ENCODE measurements at regions of chr5 and their contacts with region 1.

Region 1: GRCh38 chr5:76831110-76831452 is 12.3 kb downstream of the F2RL1 start:
- DNase-seq: peak; percentile 76
- ATAC-seq: no peak; the same call in none of the 2 replicates
- H3K4me3 ChIP-seq: no peak overlapping the region
- H3K27ac ChIP-seq: no peak overlapping the region
- H3K4me1 ChIP-seq: peaks cover 4% of the 10 kb centered on the region
- H3K27me3 ChIP-seq: no peaks in the 10 kb centered on the region
- CTCF ChIP-seq: no peak
- POLR2A ChIP-seq: no peak
- RAD21 ChIP-seq: no peak

Region 2: DNA sequence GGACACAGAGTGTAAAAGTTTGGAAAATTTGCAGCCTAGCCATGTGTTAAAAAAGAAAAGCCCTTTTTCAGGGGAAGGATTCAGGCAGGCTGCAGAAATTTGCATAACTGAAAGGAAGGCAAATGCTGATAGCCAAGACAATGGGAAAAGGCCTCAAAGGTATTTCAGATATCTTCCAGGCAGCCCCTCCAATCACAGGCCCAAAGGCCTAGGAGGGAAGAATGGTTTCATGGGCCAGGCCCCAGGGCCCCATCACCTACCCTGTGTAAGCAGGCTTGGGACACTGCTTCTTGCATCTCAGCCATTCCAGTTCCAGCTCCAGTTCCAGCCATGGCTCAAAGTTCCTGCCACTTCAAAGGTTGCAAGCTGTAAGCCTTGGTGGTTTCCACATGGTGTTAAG is 23.6 kb after region 1 on chr5:
- CTCF ChIA-PET with region 1: interaction called, 11 read pairs
- POLR2A ChIA-PET with region 1: no interaction called
- dilution Hi-C with region 1: no loop called
- in situ Hi-C with region 1: no loop called
- intact Hi-C with region 1: no loop called
- DNase-seq: no peak
- ATAC-seq: no peak
- H3K4me3 ChIP-seq: no peak overlapping the region
- H3K27ac ChIP-seq: no peak overlapping the region
- H3K4me1 ChIP-seq: no peaks in the 10 kb centered on the region
- H3K27me3 ChIP-seq: no peaks in the 10 kb centered on the region
- CTCF ChIP-seq: no peak
- POLR2A ChIP-seq: no peak
- RAD21 ChIP-seq: no peak

Region 3: DNA sequence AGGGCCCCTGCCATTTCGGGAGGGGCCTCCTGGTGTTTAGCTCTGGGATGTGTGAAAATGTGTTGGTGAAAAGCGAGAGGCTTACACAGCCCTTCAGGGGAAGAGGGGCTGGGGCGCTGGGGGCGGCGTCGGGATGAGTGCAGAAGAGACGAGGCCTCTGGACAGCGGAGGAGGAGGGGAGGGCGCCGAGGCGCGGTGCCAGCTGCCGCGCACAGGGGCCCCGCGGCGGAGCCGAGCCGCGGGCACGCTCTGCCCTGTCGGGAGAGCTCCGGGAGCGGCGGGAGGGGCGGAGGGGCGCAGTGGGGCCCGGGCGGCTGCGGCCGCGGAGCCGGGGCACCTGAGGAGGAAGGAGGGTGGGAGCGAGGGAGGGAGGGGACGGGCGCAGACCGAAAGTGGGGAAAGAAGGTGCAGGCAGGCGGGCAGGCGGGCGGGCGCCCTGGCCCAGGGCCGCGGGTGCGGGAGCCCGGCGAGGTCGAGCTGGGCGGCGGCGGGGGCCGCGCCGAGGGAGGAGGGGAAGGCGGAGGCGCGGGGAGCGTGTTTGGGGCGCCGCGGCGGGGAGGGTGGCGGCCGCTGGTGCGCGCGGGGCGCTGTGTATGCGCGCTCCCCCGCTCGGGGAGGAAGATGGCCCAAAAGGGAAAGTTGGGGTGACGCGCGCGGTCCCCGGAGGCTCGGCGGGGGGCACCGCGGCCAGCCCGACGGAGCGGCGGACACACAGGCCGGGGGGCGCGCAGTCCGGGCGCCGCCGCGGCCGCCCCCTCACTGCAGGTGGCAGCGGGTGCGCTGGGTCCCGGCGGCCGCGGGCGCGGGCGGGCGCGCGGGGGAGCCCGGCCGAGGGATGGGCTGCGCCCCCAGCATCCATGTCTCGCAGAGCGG is 379.2 kb after region 1 on chr5 and contains the start of gene PDE8B:
- CTCF ChIA-PET with region 1: no interaction called
- POLR2A ChIA-PET with region 1: no interaction called
- dilution Hi-C with region 1: no loop called
- in situ Hi-C with region 1: no loop called
- intact Hi-C with region 1: no loop called
- DNase-seq: no peak
- ATAC-seq: peak; percentile 55
- H3K4me3 ChIP-seq: peak within 1 kb of the TSS; percentile 51
- H3K27ac ChIP-seq: no peak within 1 kb of the TSS
- H3K4me1 ChIP-seq: no peaks in the 10 kb centered on the region
- H3K27me3 ChIP-seq: peaks cover 70% of the 10 kb centered on the region
- CTCF ChIP-seq: no peak
- POLR2A ChIP-seq: no peak
- RAD21 ChIP-seq: no peak
- total RNA-seq, gene PDE8B: under 0.01 TPM in 2 replicates